ENCODE measurements at regions of chr2 and their contacts with region 1.

Region 1: DNA sequence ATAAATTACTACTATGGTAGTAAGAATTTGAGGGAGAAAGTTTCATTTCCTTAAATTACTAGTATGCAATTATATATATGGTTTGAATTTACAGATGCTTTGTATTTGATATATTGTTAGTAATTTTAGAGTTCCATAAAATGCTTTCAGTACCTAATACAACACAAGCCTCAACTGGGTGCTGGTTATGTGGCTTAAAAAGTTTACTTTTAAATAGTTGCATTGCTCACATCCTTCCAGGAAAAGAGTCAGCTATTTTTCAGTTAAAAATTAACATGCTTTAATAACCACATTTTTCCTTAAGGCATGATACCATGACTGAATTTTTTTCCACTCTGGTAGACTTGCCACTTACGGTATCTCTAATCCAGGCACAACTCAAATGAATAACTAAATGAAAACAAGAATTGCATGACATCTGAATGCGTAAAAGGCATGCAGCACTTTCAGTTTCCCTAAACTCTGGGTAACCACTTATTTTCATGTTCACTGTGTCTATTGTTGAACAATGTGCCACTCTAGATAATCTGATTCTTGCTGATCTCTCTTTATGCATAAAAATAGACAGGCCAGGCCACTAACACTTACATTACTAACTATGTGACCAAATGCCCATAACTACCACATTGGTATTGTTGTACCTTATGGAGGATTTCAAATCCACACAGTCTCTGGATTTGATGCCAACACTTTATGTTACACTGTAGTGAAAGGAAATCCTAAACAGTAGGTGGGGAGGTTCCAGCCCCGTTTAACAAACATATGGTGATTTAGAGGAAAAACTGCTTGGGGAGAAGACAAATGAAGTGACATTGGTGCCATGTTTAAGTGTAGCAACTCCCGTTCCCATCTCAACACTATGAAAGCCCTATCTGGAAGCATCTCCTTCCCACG is 35.5 kb upstream of the SLC35F5 start:
- DNase-seq: peak; percentile 10
- H3K4me3 Mint-ChIP-seq: peak overlapping the region; percentile 27
- H3K27ac Mint-ChIP-seq: peak overlapping the region; percentile 96
- H3K4me1 Mint-ChIP-seq: peaks cover 32% of the 10 kb centered on the region
- H3K27me3 Mint-ChIP-seq: peaks cover 8% of the 10 kb centered on the region

Region 2: DNA sequence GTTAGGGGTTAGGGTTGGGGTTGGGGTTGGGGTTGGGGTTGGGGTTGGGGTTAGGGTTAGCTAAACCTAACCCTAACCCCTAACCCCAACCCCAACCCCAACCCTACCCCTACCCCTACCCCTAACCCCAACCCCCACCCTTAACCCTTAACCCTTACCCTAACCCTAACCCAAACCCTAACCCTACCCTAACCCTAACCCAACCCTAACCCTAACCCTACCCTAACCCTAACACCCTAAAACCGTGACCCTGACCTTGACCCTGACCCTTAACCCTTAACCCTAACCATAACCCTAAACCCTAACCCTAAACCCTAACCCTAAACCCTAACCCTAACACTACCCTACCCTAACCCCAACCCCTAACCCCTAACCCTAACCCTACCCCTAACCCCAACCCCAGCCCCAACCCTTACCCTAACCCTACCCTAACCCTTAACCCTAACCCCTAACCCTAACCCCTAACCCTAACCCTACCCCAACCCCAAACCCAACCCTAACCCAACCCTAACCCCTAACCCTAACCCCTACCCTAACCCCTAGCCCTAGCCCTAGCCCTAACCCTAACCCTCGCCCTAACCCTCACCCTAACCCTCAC is 189.0 kb before region 1 on chr2:
- CTCF ChIA-PET with region 1: interaction called, 3 read pairs
- POLR2A ChIA-PET with region 1: no interaction called
- intact Hi-C with region 1: loop called (anchors 10 kb)
- DNase-seq: no peak
- H3K4me3 Mint-ChIP-seq: peak overlapping the region; percentile 85
- H3K27ac Mint-ChIP-seq: peak overlapping the region; percentile 93
- H3K4me1 Mint-ChIP-seq: peaks cover 6% of the 10 kb centered on the region
- H3K27me3 Mint-ChIP-seq: no peaks in the 10 kb centered on the region

Region 3: DNA sequence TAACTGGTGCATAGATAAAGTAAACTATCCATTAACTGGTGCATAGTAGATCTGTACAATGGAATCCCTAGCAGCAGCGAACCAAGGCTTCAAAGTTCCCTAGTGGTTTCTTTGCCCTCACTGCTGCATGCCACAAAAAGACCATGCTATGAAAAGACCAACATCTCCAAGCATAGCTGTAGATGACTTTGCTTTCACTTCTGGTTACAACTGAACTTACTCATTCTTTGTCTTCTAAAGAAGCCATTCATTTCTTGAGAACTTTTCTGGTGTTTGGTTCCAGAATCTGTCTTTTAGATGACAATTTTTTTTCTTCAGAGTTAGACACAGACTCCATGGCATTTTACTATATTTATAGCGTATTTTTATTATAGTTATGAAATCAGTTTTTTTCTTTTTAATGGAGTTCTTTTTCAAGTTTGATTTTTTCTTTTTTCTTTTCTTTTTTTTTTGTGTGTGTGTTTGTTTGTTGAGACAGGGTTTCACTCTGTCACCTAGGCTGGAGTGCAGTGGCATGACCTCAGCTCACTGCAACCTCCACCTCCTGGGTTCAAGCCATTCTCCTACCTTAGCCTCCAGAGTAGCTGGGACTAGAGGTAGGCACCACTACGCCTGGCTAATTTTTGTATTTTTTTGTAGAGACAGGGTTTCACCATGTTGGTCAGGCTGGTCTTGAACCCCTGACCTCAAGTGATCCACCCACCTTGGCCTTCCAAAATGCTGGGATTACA is 99.1 kb before region 1 on chr2:
- CTCF ChIA-PET with region 1: interaction called, 4 read pairs
- POLR2A ChIA-PET with region 1: no interaction called
- intact Hi-C with region 1: loop called (anchors 1 kb)
- DNase-seq: peak; percentile 63
- H3K4me3 Mint-ChIP-seq: peak overlapping the region; percentile 71
- H3K27ac Mint-ChIP-seq: peak overlapping the region; percentile 95
- H3K4me1 Mint-ChIP-seq: peaks cover 42% of the 10 kb centered on the region
- H3K27me3 Mint-ChIP-seq: no peaks in the 10 kb centered on the region

Region 4: DNA sequence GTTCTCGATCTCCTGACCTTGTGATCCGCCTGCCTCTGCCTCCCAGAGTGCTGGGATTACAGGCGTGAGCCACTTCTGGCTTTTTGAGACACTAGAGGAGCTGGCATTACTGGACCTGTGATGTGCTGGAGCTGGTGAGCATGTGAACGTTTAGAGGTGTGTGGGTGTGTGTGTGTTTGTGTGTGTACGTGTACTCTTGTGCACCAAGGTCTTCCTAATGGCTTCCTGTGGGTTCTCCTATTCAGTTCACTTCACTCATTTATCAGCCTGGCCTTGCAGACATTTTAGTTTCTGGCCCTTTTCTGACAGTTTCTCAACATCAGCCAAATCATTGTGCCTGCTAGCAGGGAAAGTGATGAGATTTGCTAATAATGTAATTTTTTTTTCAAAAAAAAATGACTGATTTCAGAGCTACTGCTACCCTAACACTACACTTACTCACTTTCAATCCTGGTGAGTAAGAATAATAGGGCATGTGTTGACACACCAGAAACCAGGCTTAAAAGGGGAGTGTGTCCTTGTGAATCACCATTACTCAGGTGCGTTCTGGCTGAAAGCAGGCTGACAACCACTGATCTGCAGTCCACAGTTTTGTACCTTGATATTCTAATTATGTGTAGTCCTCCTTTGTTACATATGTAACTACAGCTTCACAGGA is 56.9 kb after region 1 on chr2:
- CTCF ChIA-PET with region 1: no interaction called
- POLR2A ChIA-PET with region 1: interaction called, 5 read pairs
- intact Hi-C with region 1: loop called (anchors 1 kb)
- DNase-seq: peak; percentile 70
- H3K4me3 Mint-ChIP-seq: peak overlapping the region; percentile 30
- H3K27ac Mint-ChIP-seq: peak overlapping the region; percentile 87
- H3K4me1 Mint-ChIP-seq: peaks cover 21% of the 10 kb centered on the region
- H3K27me3 Mint-ChIP-seq: no peaks in the 10 kb centered on the region

Region 5: DNA sequence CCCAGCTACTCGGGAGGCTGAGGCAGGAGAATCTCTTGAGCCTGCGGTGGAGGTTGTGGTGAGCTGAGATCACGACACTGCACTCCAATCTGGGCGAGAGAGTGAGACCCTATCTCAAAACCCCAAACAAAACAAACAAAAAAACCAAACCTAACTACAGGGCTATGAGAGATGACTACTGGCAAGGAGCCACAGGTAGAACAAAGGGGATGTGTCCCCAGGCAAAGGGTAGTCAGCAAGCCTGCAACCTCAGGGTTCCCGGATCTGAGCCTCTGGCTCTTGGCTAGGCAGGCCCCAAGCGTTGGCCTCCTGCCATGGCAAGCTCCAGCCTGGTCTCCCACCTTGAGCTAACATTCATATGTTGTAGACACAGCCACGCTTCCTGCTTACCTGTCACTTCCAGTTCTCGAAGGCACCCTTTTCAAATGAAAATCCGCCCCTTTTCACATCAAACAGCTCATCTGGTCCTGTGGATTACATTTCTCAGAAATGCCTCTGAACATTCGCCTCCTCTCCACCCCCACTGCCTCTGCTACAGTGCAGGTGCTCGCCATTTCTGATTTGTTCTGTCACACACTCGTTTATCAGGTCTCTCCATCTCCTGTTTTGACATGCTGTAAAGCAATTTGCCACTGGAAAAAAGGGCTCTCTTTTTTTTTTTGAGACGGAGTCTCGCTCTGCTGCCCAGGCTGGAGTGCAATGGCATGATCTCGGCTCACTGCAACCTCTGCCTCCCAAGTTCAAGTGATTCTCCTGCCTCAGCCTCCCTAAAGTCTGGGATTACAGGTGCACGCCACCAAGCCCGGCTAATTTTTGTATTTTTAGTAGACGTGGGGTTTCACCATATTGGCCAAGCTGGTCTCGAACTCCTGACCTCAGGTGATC is 84.8 kb after region 1 on chr2:
- CTCF ChIA-PET with region 1: interaction called, 4 read pairs
- POLR2A ChIA-PET with region 1: interaction called, 3 read pairs
- intact Hi-C with region 1: loop called (anchors 1 kb)
- DNase-seq: peak; percentile 93
- H3K4me3 Mint-ChIP-seq: peak overlapping the region; percentile 30
- H3K27ac Mint-ChIP-seq: peak overlapping the region; percentile 84
- H3K4me1 Mint-ChIP-seq: peaks cover 38% of the 10 kb centered on the region
- H3K27me3 Mint-ChIP-seq: no peaks in the 10 kb centered on the region

Measured in activated CD4-positive, alpha-beta memory T cell treated with anti-CD3 and anti-CD28 coated beads for 36 hours (primary cell).